ENCODE measurements at regions of chr7 and their contacts with region 1.

Region 1: DNA sequence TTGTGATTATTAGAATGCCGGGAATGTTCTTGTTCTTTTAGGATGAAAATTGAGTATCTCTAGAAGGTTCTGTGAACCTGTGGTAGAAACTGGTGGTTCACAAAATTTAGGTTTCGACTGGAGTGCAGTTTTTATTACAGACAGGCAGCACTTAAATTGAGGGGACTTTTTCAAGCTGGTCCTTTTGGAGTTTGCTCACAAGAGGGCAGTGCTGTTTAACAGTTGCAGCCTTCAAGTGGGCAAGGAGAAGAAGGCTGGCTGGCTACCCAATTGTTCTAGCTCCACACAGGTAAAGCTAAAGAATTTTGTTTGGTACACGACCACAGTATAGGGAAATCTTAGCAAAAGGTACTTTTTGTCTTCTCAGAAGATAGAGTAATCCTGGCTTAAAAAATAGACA is 233.6 kb downstream of the SNX13 start:
- DNase-seq: peak; percentile 16
- H3K4me3 ChIP-seq: no peak overlapping the region
- H3K27me3 ChIP-seq: peaks cover 1% of the 10 kb centered on the region; the same call in 1 of the 2 replicates
- CTCF ChIP-seq: peak; percentile 77

Region 2: DNA sequence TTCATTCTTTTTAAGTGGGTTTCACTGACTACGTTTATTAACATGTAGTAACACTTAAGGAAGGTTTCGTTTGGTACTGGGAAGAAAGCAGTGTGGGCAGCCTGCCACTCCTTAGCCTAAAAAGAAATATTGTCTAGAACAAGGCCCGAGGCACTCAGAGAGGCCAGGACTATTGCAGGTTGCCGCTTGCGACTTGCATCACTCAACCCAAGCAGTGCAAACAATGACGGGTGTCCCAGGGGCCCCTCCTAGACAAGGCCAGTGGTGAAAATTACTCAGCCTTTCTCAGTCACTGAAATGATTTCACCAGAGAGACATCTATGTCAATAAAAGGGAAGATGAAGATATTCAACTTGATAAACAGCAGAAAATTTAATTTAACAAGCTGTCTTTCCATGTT is 10.3 kb before region 1 on chr7:
- CTCF ChIA-PET with region 1: interaction called, 16 read pairs
- POLR2A ChIA-PET with region 1: no interaction called
- DNase-seq: no peak
- H3K4me3 ChIP-seq: no peak overlapping the region
- H3K27me3 ChIP-seq: no peaks in the 10 kb centered on the region
- CTCF ChIP-seq: no peak

Region 3: DNA sequence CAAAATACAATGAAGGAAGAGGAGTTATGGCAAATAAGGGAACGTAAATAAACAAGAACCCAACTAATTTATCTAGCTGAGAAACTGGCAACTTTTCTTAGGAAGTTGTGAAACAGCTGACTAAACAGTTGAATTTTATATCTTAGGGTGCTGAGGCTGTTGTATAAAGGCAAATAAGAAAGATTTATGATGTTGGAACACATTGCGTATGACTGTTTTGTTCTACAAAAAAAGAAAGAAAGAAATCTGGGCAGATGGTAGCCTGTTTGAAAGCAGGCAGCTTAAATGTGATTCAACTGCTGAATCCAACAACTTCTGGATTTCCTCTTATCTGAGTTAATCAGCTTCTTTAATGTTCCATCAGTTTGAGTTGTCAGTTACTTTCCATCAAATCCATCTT is 19.1 kb after region 1 on chr7:
- CTCF ChIA-PET with region 1: interaction called, 12 read pairs
- POLR2A ChIA-PET with region 1: no interaction called
- DNase-seq: no peak
- H3K4me3 ChIP-seq: no peak overlapping the region
- H3K27me3 ChIP-seq: peaks cover 3% of the 10 kb centered on the region; the same call in 1 of the 2 replicates
- CTCF ChIP-seq: no peak

Measured in BJ (cell line).